Sigmoid colon (tissue), 7 donors: ENCODE measurements at regions of chr20 and their contacts with region 1.

Region 1: GRCh38 chr20:1802385-1803060 is 92.7 kb upstream of the SIRPA start:
- DNase-seq: peak; percentile 80
- H3K4me3 ChIP-seq: peak overlapping the region; percentile 20 to 71 (median 54)
- H3K27ac ChIP-seq: peak overlapping the region; percentile 60 to 80 (median 68)
- H3K4me1 ChIP-seq: peaks cover 0 to 23% (median 19%) of the 10 kb centered on the region in 4 donors
- H3K27me3 ChIP-seq: no peaks in the 10 kb centered on the region
- CTCF ChIP-seq: peak; percentile 53 to 72 (median 65)
- EP300 ChIP-seq: no peak
- POLR2A ChIP-seq: no peak

Region 2: DNA sequence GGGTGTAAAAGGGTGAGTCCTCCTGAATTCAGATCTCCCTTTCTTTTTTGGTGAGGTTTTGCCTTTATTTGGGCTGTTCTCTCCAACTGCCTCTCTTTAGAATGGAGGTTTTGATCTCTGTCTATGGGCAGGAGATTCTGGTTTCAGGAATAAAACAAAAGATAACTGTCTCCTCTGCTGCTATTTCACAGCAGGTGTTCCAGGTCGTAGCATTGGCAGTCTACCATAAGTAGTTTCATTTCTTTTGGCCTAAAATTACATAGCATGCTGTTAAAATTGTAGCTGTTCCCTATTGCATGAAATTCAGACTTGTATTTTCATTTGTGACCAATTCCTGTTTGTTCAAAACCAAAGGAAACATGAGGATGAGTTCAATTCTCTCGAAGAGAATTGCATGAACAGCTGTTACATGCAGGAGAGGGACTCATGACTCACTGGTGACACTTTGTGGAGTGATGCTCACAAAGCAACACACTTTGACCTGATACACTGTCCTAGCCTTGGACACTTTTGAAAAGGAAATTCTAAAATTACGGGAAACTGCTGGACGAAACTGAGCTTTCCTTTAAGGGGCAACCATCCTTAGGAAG is 68.2 kb before region 1 on chr20:
- intact Hi-C with region 1: no loop called
- DNase-seq: no peak
- H3K4me3 ChIP-seq: no peak overlapping the region
- H3K27ac ChIP-seq: no peak overlapping the region
- H3K4me1 ChIP-seq: no peaks in the 10 kb centered on the region
- H3K27me3 ChIP-seq: no peaks in the 10 kb centered on the region
- CTCF ChIP-seq: no peak
- EP300 ChIP-seq: no peak
- POLR2A ChIP-seq: no peak

Region 3: GRCh38 chr20:1844325-1845162 is 42.0 kb after region 1 on chr20:
- intact Hi-C with region 1: loop called (anchors 2 kb)
- DNase-seq: peak; percentile 94
- H3K4me3 ChIP-seq: no peak overlapping the region
- H3K27ac ChIP-seq: peak overlapping the region; percentile 28 to 89 (median 81)
- H3K4me1 ChIP-seq: peaks cover 0 to 62% (median 52%) of the 10 kb centered on the region in 4 donors
- H3K27me3 ChIP-seq: no peaks in the 10 kb centered on the region
- CTCF ChIP-seq: peak in 2 of 4 experiments; percentile 6 to 10
- EP300 ChIP-seq: peak; percentile 59 to 88 (median 80)
- POLR2A ChIP-seq: no peak

Region 4: GRCh38 chr20:1934721-1935573 is 132.4 kb after region 1 on chr20:
- intact Hi-C with region 1: loop called (anchors 5 kb)
- DNase-seq: peak; percentile 92
- H3K4me3 ChIP-seq: no peak overlapping the region
- H3K27ac ChIP-seq: peak overlapping the region; percentile 60 to 79 (median 64)
- H3K4me1 ChIP-seq: peaks cover 0 to 35% (median 28%) of the 10 kb centered on the region in 4 donors
- H3K27me3 ChIP-seq: no peaks in the 10 kb centered on the region
- CTCF ChIP-seq: no peak
- EP300 ChIP-seq: peak in 1 of 4 donors; percentile 17
- POLR2A ChIP-seq: no peak